Endothelial cell of umbilical vein (primary cell): ENCODE measurements at regions of chr4 and their contacts with region 1.

Region 1: DNA sequence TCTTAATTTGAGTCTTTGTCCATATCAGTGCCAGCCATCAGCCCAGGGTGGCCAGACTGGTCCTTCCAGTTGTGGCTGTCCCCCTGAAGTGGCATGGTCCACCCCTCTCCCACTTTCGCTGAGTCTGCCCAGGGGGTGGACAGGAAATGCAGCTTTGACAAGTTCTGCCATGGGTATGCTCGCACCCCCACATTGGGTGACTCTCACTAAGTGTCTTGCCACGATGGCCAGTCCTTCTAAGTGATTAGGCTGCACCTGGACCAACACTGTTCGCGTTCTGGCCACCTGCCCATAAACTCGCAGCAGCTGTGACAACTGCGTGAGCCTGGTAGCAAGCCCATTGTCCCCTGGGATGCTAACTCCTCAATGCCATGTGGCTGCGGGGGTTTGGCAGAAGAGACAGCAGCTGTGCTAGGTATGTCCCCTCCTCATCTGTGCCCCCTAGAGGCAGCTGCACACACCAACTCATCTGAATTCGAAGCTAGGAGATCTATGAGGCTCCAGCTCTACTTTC is 10.0 kb upstream of the LNX1 start:
- DNase-seq: peak; percentile 22
- H3K4me3 ChIP-seq: no peak overlapping the region
- H3K27ac ChIP-seq: no peak overlapping the region
- H3K4me1 ChIP-seq: peaks cover 2% of the 10 kb centered on the region
- H3K27me3 ChIP-seq: no peaks in the 10 kb centered on the region
- CTCF ChIP-seq: peak; percentile 35 to 57
- POLR2A ChIP-seq: no peak

Region 2: DNA sequence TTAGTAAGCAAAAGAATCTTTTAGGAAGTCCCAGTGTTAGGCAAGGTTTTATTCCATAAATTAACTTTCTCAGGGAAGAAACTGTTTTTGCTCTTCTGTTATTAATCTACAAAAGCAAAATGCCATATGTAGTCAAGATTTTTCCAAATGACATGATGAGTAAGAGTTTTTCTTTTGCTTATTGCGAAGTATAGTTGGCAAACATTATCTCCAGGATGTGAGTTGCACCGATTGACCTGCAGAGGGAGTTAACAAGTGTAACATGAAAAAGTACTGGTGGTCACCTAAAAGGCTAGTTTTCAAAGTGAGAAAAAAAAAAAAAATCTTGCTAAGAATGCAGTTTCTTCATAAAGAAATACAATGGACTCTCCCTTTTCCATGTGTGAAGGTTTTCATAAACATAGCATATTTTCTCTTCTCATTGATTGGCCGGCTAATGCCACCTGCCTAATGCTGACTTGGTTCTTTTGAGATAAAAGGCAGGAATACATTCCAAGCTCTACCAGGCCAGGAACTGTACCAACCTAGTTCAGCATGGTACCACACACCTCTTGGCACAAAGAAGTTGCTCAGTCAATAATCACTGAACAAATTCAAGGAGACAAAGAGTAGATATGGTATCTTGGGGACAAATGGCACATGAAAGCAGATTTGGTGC is 110.2 kb before region 1 on chr4:
- CTCF ChIA-PET with region 1: interaction called, 35 read pairs
- POLR2A ChIA-PET with region 1: no interaction called
- dilution Hi-C with region 1: no loop called
- intact Hi-C with region 1: loop called (anchors 2 kb)
- DNase-seq: peak; percentile 85
- H3K4me3 ChIP-seq: no peak overlapping the region
- H3K27ac ChIP-seq: no peak overlapping the region
- H3K4me1 ChIP-seq: peaks cover 6% of the 10 kb centered on the region
- H3K27me3 ChIP-seq: no peaks in the 10 kb centered on the region
- CTCF ChIP-seq: peak; percentile 52 to 55
- POLR2A ChIP-seq: no peak

Region 3: DNA sequence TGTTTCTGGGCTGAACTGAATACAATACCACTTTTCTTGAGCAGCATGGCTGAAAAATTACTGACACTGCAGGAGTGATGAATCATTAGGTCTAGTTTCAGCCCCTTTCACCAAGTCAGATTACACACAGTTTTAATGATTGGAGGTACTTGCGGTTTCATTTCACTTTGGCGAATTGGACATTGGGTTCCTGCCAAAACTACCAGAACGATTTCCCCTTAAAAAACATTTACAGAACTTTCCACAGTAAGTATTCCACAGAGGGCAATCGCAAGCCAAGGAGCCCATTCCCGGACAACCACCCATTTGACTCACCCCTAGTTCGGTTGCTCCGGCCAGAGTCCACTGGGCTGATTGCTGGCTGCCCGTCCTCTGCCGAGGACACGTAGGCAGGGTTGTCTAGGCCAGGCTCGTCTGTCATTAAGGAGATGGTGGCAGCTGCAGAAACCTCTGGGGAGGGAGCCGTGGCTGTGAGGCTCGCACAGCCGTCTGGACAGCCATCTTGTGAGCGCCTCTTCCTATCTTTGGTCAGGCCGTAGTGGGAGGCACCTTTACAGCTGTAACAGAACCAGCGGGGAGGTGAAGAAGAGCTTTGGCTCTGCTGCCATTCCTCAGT is 93.5 kb before region 1 on chr4:
- CTCF ChIA-PET with region 1: interaction called, 18 read pairs
- POLR2A ChIA-PET with region 1: no interaction called
- dilution Hi-C with region 1: no loop called
- intact Hi-C with region 1: no loop called
- DNase-seq: peak; percentile 77
- H3K4me3 ChIP-seq: peak overlapping the region in 1 of 3 experiments; percentile 4
- H3K27ac ChIP-seq: no peak overlapping the region
- H3K4me1 ChIP-seq: no peaks in the 10 kb centered on the region
- H3K27me3 ChIP-seq: peaks cover 10 to 13% of the 10 kb centered on the region in 2 experiments
- CTCF ChIP-seq: no peak
- POLR2A ChIP-seq: no peak

Region 4: DNA sequence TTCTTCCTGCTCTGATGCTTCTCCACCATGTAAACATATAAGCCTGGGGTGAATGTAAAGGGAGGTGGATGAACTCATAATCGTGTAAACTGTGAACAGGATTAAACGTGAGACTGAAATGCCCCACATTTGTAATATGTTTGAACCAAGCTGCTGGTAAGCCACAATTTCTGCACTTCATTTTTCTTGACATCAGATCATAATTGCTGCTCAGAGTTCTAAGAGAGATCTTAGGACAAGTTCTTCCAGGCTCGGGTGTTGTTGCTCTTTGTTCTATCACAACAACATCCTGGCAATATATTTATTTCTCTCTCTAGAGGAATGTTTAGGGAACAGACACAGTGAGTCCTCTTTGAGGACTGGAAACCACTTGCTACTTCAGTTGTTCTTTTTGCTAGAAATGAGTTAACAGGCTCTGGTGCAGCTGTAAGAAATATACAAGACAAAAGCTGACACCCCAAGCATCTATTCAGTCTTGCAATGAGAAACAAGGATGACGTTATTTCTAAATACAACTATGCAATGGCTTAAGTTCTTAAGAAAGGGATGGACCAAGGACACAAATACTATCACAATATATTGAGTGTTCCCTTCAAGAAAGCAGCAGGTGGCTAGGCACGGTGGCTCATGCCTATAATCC is 69.6 kb before region 1 on chr4:
- CTCF ChIA-PET with region 1: no interaction called
- POLR2A ChIA-PET with region 1: no interaction called
- dilution Hi-C with region 1: no loop called
- intact Hi-C with region 1: no loop called
- DNase-seq: no peak
- H3K4me3 ChIP-seq: no peak overlapping the region
- H3K27ac ChIP-seq: no peak overlapping the region
- H3K4me1 ChIP-seq: no peaks in the 10 kb centered on the region
- H3K27me3 ChIP-seq: no peaks in the 10 kb centered on the region
- CTCF ChIP-seq: no peak
- POLR2A ChIP-seq: no peak

Region 5: DNA sequence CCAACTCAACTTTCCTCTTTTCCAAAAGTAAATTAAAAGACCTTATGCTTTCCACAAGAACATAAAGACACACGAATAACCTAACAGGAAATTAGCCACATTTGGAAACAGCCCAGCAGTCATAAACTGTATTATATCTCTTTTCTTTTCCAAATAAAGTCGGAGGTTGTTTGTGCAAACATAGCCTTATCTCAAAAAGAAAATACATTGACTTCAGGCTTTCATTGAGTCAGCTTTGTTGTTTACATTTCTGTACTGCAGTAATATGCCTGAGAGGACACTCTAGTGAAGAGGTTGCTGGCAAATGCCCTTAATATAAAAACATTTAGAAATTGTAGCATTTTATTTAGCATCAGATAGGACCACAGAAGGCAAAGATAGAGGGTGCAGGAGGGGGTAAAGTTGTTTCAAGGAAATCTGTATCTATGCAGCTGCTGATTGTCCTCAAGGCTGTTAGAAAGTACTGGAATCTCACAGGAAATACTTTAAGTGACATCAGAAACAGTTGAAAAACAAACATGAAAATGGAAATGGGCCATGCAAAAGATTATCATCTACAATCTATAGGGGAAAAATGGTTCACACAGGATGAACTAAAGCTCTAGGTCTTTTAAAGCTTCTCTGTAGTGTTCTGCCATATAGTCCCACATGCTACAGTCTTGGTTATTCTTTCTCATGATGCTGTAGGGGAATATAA is 24.5 kb before region 1 on chr4:
- CTCF ChIA-PET with region 1: interaction called, 5 read pairs
- POLR2A ChIA-PET with region 1: no interaction called
- dilution Hi-C with region 1: no loop called
- intact Hi-C with region 1: loop called (anchors 1 kb)
- DNase-seq: peak; percentile 90
- H3K4me3 ChIP-seq: no peak overlapping the region
- H3K27ac ChIP-seq: peak overlapping the region; percentile 40
- H3K4me1 ChIP-seq: peaks cover 36% of the 10 kb centered on the region
- H3K27me3 ChIP-seq: no peaks in the 10 kb centered on the region
- CTCF ChIP-seq: no peak
- POLR2A ChIP-seq: peak; percentile 35